Gastrocnemius medialis (tissue), 4 donors: ENCODE measurements at regions of chr12 and their contacts with region 1.

Region 1: GRCh38 chr12:6341417-6342139 is at the start of gene TNFRSF1A:
- DNase-seq: peak; percentile 80 to 84
- ATAC-seq: peak; percentile 87 to 88
- H3K4me3 ChIP-seq: peak within 1 kb of the TSS; percentile 58 to 99 (median 81)
- H3K27ac ChIP-seq: peak within 1 kb of the TSS; percentile 92 to 99 (median 96)
- H3K4me1 ChIP-seq: peaks cover 55 to 59% of the 10 kb centered on the region in 2 donors
- H3K27me3 ChIP-seq: no peaks in the 10 kb centered on the region
- CTCF ChIP-seq: no peak
- POLR2A ChIP-seq: peak; percentile 63 to 71
- total RNA-seq, gene TNFRSF1A: 103 to 220 (median 193) TPM

Region 2: DNA sequence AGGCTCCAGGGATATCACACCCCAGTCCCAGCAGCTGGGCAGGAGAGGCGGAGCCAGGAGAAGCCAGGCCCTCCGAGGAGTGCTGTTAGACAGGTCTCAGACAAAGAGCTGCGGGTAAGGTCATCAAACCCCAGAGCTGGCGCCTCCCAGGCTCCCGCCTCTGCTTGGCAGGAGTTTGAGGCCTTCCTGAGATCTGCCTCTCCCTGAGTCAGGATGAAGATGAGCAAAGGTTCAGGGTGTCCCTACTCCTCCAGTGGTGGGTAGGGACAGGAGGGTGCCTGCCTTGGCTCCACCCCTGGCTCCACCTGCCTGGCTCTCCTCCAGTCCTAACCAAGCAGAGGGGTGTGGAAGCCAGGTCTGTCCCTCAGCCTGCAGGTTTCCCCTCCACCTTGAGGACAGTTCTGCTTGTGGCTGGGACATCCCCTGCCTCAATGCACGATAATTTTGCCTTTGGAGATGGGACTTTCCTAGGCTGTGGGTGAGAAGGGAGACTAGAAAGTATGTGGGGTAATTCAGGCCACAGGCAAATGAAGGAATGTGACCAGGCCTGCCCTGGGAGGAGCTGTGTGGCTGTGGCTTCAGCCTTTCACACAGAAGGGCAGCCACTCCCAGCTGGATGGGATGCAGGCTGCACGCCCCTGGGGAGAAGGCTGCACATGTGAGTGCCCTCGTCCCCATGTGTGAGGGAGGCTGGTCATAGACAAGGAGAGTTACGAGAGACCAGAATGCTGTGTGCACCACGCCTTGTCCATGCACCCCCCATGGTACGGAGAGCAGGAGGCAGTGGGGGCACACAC is 28.9 kb before region 1 on chr12:
- in situ Hi-C with region 1: no loop called
- intact Hi-C with region 1: no loop called
- DNase-seq: no peak
- ATAC-seq: no peak
- H3K4me3 ChIP-seq: no peak overlapping the region
- H3K27ac ChIP-seq: no peak overlapping the region
- H3K4me1 ChIP-seq: no peaks in the 10 kb centered on the region
- H3K27me3 ChIP-seq: peaks cover 14 to 16% (median 16%) of the 10 kb centered on the region in 3 donors
- CTCF ChIP-seq: no peak
- POLR2A ChIP-seq: no peak

Region 3: GRCh38 chr12:6355491-6356371 is 14.2 kb after region 1 on chr12:
- in situ Hi-C with region 1: no loop called
- intact Hi-C with region 1: loop called (anchors 2 kb)
- DNase-seq: no peak
- ATAC-seq: no peak
- H3K4me3 ChIP-seq: no peak overlapping the region
- H3K27ac ChIP-seq: no peak overlapping the region
- H3K4me1 ChIP-seq: peaks cover 23% of the 10 kb centered on the region in 2 donors
- H3K27me3 ChIP-seq: no peaks in the 10 kb centered on the region
- CTCF ChIP-seq: no peak
- POLR2A ChIP-seq: no peak

Region 4: DNA sequence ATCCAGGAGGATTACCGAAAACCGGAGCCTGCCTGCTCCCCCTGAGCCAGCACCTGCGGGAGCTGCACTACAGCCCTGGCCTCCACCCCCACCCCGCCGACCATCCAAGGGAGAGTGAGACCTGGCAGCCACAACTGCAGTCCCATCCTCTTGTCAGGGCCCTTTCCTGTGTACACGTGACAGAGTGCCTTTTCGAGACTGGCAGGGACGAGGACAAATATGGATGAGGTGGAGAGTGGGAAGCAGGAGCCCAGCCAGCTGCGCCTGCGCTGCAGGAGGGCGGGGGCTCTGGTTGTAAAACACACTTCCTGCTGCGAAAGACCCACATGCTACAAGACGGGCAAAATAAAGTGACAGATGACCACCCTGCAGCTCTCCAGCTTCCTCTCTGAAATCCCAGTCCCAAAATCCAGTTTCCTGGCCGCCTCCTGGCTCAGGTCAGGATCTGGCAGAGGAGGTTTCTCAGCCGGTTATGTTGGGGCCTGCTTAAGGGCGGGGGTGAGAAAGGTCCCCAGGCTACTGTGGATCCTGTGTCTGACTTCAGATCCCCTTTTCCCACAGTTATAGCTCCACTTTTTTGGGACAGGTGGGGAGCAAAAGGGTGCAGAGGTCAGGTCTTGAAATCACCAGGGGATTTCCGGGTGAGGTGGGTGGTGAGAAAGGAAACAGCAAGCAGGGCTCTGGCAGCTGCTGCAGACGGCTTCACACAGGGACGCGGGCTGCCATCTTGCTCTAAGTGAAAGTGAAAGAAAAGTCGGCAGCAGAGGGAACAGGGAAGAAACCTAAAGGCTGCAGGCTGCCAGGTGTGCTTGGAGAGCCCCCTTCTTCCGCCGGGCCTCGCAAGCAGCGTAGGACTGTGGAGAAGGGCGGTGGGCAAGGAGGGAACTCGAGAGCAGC is 110.0 kb after region 1 on chr12 and contains the start of gene TAPBPL:
- in situ Hi-C with region 1: loop called in 1 of 4 experiments (anchors 25 kb)
- intact Hi-C with region 1: loop called (anchors 5 kb)
- DNase-seq: peak; percentile 68 to 85
- ATAC-seq: peak; percentile 79 to 90
- H3K4me3 ChIP-seq: peak within 1 kb of the TSS; percentile 72 to 91 (median 84)
- H3K27ac ChIP-seq: peak within 1 kb of the TSS; percentile 96 to 99 (median 98)
- H3K4me1 ChIP-seq: peaks cover 18% of the 10 kb centered on the region in 2 donors
- H3K27me3 ChIP-seq: no peaks in the 10 kb centered on the region
- CTCF ChIP-seq: no peak
- POLR2A ChIP-seq: peak; percentile 60 to 66
- total RNA-seq, gene TAPBPL: 3.8 to 8.6 (median 5.8) TPM